ENCODE measurements at regions of chr1 and their contacts with region 1.

Region 1: DNA sequence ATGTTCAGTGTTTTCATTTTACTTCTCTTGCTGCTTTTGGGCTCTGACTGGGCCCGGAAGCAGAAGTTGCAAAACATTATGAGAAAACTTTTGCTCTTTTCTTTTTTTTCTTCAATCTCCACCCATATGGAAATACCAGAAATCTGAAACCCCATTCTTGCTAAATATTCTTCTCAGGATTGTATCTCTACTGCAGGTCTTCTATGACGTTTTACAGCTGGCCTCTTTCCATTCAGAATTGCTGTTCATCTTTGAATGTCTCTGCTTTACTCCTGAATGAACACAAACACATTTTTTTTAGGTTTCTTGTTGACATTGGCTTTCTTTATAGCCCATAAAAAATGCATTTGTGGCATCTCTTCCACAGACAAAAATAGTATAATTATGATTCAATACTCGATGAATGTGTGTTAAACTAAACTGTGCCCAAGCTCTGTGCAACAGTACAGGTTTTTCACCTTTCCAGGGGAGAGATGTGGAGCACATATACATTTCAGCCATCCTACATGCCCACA is 18.8 kb downstream of the PTPRC start:
- DNase-seq: peak; percentile 58 to 73 (median 65)
- H3K4me3 ChIP-seq: peak overlapping the region; percentile 22 to 33
- H3K4me3 Mint-ChIP-seq: peak overlapping the region; percentile 59 to 87 (median 79)
- H3K27ac ChIP-seq: peak overlapping the region; percentile 93
- H3K27ac Mint-ChIP-seq: peak overlapping the region; percentile 96 to 99 (median 98)
- H3K4me1 ChIP-seq: peaks cover 91% of the 10 kb centered on the region
- H3K4me1 Mint-ChIP-seq: peaks cover 43 to 65% (median 58%) of the 10 kb centered on the region in 4 donors
- H3K27me3 ChIP-seq: no peaks in the 10 kb centered on the region
- H3K27me3 Mint-ChIP-seq: no peaks in the 10 kb centered on the region

Region 2: GRCh38 chr1:198575798-198576641 is 81.6 kb before region 1 on chr1:
- CTCF ChIA-PET with region 1: no interaction called
- POLR2A ChIA-PET with region 1: no interaction called
- intact Hi-C with region 1: no loop called
- DNase-seq: no peak
- H3K4me3 ChIP-seq: no peak overlapping the region
- H3K4me3 Mint-ChIP-seq: no peak overlapping the region
- H3K27ac ChIP-seq: no peak overlapping the region
- H3K27ac Mint-ChIP-seq: peak overlapping the region in 3 of 7 donors; percentile 1 to 69 (median 7)
- H3K4me1 ChIP-seq: no peaks in the 10 kb centered on the region
- H3K4me1 Mint-ChIP-seq: peaks cover 0 to 26% (median 8%) of the 10 kb centered on the region in 4 donors
- H3K27me3 ChIP-seq: no peaks in the 10 kb centered on the region
- H3K27me3 Mint-ChIP-seq: no peaks in the 10 kb centered on the region

Region 3: GRCh38 chr1:198633675-198634121 is 23.9 kb before region 1 on chr1:
- CTCF ChIA-PET with region 1: interaction called, 5 read pairs
- POLR2A ChIA-PET with region 1: interaction called, 75 read pairs
- intact Hi-C with region 1: loop called (anchors 2 kb)
- DNase-seq: no peak
- H3K4me3 ChIP-seq: no peak overlapping the region
- H3K4me3 Mint-ChIP-seq: peak overlapping the region in 7 of 8 donors; percentile 1 to 76 (median 36)
- H3K27ac ChIP-seq: no peak overlapping the region
- H3K27ac Mint-ChIP-seq: peak overlapping the region; percentile 29 to 88 (median 62)
- H3K4me1 ChIP-seq: peaks cover 96% of the 10 kb centered on the region
- H3K4me1 Mint-ChIP-seq: peaks cover 65 to 85% (median 70%) of the 10 kb centered on the region in 4 donors
- H3K27me3 ChIP-seq: no peaks in the 10 kb centered on the region
- H3K27me3 Mint-ChIP-seq: no peaks in the 10 kb centered on the region

Region 4: GRCh38 chr1:198669023-198669698 is 11.6 kb after region 1 on chr1:
- CTCF ChIA-PET with region 1: interaction called, 12 read pairs
- POLR2A ChIA-PET with region 1: interaction called, 449 read pairs
- intact Hi-C with region 1: loop called (anchors 1 kb)
- DNase-seq: peak; percentile 56 to 81 (median 68)
- H3K4me3 ChIP-seq: no peak overlapping the region
- H3K4me3 Mint-ChIP-seq: peak overlapping the region; percentile 64 to 82 (median 76)
- H3K27ac ChIP-seq: peak overlapping the region; percentile 61
- H3K27ac Mint-ChIP-seq: peak overlapping the region; percentile 96 to 99 (median 97)
- H3K4me1 ChIP-seq: peaks cover 98% of the 10 kb centered on the region
- H3K4me1 Mint-ChIP-seq: peaks cover 75 to 95% (median 85%) of the 10 kb centered on the region in 4 donors
- H3K27me3 ChIP-seq: no peaks in the 10 kb centered on the region
- H3K27me3 Mint-ChIP-seq: no peaks in the 10 kb centered on the region

Measured in CD4-positive, alpha-beta memory T cell (primary cell).